Left ventricle myocardium superior (tissue), 1 donor: ENCODE measurements at regions of chr14 and their contacts with region 1.

Region 1: DNA sequence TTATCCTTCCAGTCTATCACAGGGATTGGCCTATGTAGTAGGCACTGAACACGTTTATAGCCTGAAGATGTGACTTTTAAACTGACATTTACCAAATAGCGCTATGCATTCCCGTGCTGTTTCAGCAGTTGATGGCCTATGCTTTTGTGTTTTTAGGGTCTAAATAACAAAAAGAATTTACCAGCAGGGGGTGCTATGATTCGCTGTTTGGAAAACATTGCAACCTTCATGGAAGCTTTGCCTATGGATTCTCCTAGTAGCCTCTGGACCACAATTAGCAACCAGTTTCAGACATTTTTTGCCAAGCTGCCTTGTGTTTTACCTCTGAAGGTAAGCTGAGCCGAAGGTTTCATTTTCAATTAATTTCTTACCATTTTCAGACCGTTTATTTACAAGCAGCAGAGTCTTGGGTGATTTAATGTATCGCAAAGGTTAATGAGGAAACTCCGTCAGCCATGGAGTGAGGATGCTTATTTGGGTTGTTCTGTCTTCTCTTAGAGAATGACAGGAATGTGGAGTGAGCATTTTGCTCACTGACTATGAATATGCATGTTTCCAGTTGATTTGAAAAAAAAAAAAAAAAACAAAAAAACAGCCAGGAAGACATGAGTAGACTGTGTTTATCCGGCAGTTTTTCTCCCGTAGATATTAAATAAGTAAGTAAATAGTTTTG is 133.1 kb downstream of the PRIMA1 start:
- DNase-seq: no peak
- ATAC-seq: peak; percentile 46

Region 2: GRCh38 chr14:93892923-93893558 is 237.8 kb after region 1 on chr14:
- intact Hi-C with region 1: loop called (anchors 5 kb)
- DNase-seq: peak; percentile 84
- ATAC-seq: peak; percentile 81